HepG2 (cell line): ENCODE measurements at regions of chr10 and their contacts with region 1.

Region 1: GRCh38 chr10:14500172-14500765 is 169.5 kb upstream of the FRMD4A start:
- DNase-seq: no peak
- ATAC-seq: no peak
- H3K4me3 ChIP-seq: no peak overlapping the region
- H3K27ac ChIP-seq: no peak overlapping the region
- H3K4me1 ChIP-seq: no peaks in the 10 kb centered on the region
- H3K27me3 ChIP-seq: no peaks in the 10 kb centered on the region; a peak in 1 of 5 replicates
- CTCF ChIP-seq: no peak
- EP300 ChIP-seq: no peak
- POLR2A ChIP-seq: no peak
- RAD21 ChIP-seq: no peak

Region 2: DNA sequence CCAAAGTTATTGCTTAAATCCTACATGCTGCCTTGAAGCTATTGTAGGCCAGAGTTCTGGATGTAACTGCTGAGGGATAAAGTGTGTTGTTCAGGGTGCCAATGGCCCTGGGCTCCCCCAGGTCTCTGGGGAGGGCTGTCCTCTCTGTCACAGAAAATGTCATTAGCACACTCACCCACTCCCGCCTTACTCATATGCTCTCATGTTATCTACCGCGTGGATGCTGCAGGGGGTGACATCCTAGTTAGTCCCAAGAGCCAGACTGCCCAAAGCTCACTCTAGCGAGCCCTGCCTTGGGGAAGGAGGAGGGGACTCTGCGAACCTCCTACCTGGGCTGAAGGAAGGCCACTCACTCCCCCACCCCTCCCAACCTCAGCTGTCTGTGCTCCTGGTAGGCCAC is 292.0 kb before region 1 on chr10:
- CTCF ChIA-PET with region 1: no interaction called
- POLR2A ChIA-PET with region 1: no interaction called
- in situ Hi-C with region 1: no loop called
- intact Hi-C with region 1: no loop called
- DNase-seq: no peak
- ATAC-seq: no peak
- H3K4me3 ChIP-seq: no peak overlapping the region
- H3K27ac ChIP-seq: no peak overlapping the region
- H3K4me1 ChIP-seq: no peaks in the 10 kb centered on the region
- H3K27me3 ChIP-seq: no peaks in the 10 kb centered on the region
- CTCF ChIP-seq: no peak
- EP300 ChIP-seq: no peak
- POLR2A ChIP-seq: no peak
- RAD21 ChIP-seq: no peak

Region 3: GRCh38 chr10:14556285-14556956 is 56.2 kb after region 1 on chr10:
- CTCF ChIA-PET with region 1: no interaction called
- POLR2A ChIA-PET with region 1: no interaction called
- in situ Hi-C with region 1: no loop called
- intact Hi-C with region 1: loop called (anchors 1 kb)
- DNase-seq: peak; percentile 68
- ATAC-seq: peak; percentile 88
- H3K4me3 ChIP-seq: peak overlapping the region in 1 of 3 experiments; percentile 21; a peak in 1 of 6 replicates
- H3K27ac ChIP-seq: peak overlapping the region; percentile 41
- H3K4me1 ChIP-seq: peaks cover 67% of the 10 kb centered on the region
- H3K27me3 ChIP-seq: no peaks in the 10 kb centered on the region
- CTCF ChIP-seq: peak; percentile 81
- EP300 ChIP-seq: no peak
- POLR2A ChIP-seq: no peak
- RAD21 ChIP-seq: peak; percentile 35; the same call in 1 of the 2 replicates

Region 4: DNA sequence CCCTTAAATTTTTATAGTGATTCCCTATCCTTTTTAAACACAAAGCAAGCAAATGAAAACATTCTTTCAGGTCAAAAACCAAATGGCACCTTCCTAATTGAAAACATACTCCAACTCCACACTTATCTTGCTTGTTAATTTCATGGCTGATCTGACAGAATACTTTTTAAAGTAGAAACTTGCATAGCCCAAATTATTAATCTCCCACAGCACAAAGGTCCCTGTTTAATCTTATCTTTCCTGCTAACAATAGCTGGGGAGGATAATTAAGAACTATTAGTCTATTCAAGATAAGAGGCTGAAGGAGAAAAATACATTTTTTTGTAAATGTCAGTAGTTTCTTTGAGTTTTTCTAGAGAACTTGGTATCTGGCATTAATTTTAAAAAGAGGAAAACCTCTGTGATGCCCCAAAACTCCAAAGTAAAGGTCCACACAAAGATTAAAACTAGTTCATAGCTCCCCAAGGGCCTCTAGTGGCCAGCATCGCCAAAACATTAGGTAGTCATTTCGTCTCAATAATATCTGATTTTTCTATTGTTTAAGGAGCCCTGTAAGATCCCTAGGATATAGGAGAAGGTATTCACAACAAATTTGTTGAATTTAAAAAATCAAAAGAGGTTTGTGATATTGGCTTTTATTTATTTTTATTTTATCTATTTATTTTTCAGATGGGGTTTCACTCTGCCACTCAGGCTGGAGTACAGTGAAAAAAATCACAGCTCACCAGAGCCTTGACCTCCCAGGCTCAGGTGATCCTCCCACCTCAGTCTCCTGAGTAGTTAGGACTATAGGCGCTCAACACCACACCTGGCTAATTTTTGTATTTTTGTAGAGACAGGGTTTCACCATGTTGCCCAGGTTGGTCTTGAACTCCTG is 322.8 kb after region 1 on chr10:
- CTCF ChIA-PET with region 1: interaction called, 16 read pairs
- POLR2A ChIA-PET with region 1: no interaction called
- in situ Hi-C with region 1: loop called (anchors 5 kb)
- intact Hi-C with region 1: loop called (anchors 1 kb)
- DNase-seq: peak; percentile 12
- ATAC-seq: peak; percentile 44; the same call in 1 of the 3 replicates
- H3K4me3 ChIP-seq: no peak overlapping the region
- H3K27ac ChIP-seq: no peak overlapping the region
- H3K4me1 ChIP-seq: no peaks in the 10 kb centered on the region
- H3K27me3 ChIP-seq: peaks cover 0 to 1% of the 10 kb centered on the region in 2 experiments; a peak in 1 of 5 replicates
- CTCF ChIP-seq: peak; percentile 55
- EP300 ChIP-seq: no peak
- POLR2A ChIP-seq: no peak
- RAD21 ChIP-seq: 0 out of 2 replicates have a peak, but pooled peaks have one; percentile 44

Region 5: DNA sequence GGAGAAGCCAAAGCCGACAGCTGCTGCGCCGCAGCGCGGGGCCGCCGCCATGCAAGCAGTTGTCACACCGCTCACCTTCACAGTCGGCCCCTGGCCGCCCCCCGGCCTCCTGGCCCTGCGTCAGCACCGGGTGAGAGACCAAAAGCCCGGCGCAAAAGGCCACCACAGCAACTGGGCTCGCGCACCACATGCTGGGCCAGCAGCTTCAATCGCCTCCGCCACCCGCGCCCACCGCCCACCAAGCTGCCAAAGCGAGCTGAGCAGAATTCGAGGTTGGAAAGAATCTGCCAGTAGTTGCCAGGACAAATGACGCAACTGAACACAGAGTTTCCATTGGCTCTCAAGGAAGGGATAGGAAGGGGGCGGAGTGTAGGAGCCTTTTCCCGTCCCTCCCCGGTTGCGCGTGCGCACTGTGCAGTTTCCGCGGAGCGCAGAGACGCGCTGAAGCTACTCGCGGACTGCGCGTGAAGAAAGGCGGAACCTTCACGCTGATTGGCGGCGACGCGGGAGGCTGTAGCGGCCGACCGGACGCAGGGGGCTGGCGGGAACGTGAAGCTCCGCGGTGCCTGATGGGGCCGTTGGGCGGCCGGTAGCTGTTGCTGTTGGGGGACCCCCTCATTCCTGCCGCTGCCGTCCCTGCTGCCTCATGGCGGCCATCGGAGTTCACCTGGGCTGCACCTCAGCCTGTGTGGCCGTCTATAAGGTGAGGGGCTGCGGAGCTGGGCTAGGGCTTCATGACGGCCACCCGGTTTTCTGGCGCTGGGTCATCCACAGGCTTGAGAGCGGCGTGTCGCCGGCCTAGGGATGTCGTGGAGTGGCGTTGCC is 337.7 kb after region 1 on chr10 and contains the starts of genes CDNF, HSPA14 and MSANTD7:
- CTCF ChIA-PET with region 1: no interaction called
- POLR2A ChIA-PET with region 1: no interaction called
- in situ Hi-C with region 1: no loop called
- intact Hi-C with region 1: loop called (anchors 5 kb)
- DNase-seq: peak; percentile 98
- ATAC-seq: peak; percentile 96
- H3K4me3 ChIP-seq: peak within 1 kb of the TSS; percentile 79 to 98 (median 93)
- H3K27ac ChIP-seq: peak within 1 kb of the TSS; percentile 83
- H3K4me1 ChIP-seq: peaks cover 17% of the 10 kb centered on the region
- H3K27me3 ChIP-seq: no peaks in the 10 kb centered on the region; a peak in 1 of 5 replicates
- CTCF ChIP-seq: 0 out of 2 replicates have a peak, but pooled peaks have one; percentile 13
- EP300 ChIP-seq: peak; percentile 18 to 19; a peak in 1 of 4 replicates
- POLR2A ChIP-seq: peak; percentile 76 to 83
- RAD21 ChIP-seq: peak; percentile 58
- total RNA-seq, gene CDNF: 0.33 and 0.38 TPM in 2 replicates
- total RNA-seq, gene HSPA14: 29.8 and 42.9 TPM in 2 replicates
- total RNA-seq, gene MSANTD7: 16.7 and 22.8 TPM in 2 replicates

Region 6: DNA sequence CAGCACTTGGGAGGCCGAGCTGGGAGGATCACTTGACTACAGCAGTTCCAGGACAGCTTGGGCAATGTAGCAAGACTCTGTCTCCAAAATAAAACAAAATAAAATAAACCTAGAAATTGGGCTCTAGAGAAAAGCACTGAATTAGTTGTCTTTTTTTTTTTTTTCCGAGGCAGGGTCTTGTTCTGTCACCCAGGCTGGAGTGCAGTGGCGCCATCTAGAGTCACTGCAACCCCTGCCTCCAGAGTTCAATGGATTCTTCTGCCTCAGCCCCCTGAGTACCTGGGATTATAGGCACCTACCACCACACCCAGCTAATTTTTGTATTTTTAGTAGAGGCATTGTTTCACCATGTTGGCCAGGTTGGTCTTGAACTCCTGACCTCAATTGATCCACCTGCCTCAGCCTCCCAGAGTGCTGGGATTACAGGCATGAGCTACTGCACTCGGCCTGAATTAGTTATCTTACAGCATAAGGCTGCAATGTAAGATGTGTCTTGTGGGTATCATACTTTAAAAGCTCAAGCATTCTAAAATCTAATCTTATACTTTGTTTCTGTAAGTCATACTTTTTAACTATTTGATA is 471.7 kb after region 1 on chr10:
- CTCF ChIA-PET with region 1: interaction called, 6 read pairs
- POLR2A ChIA-PET with region 1: no interaction called
- in situ Hi-C with region 1: no loop called
- intact Hi-C with region 1: loop called (anchors 5 kb)
- DNase-seq: no peak
- ATAC-seq: peak; percentile 87
- H3K4me3 ChIP-seq: no peak overlapping the region
- H3K27ac ChIP-seq: no peak overlapping the region
- H3K4me1 ChIP-seq: peaks cover 12% of the 10 kb centered on the region
- H3K27me3 ChIP-seq: no peaks in the 10 kb centered on the region
- CTCF ChIP-seq: peak; percentile 70
- EP300 ChIP-seq: no peak
- POLR2A ChIP-seq: no peak
- RAD21 ChIP-seq: no peak